ENCODE measurements at regions of chr1 and their contacts with region 1.

Region 1: GRCh38 chr1:150532868-150533302 is 16.3 kb upstream of the ADAMTSL4 start:
- DNase-seq: no peak
- H3K4me3 ChIP-seq: no peak overlapping the region
- H3K4me3 Mint-ChIP-seq: peak overlapping the region; percentile 66
- H3K27ac Mint-ChIP-seq: peak overlapping the region; percentile 91
- H3K4me1 ChIP-seq: peaks cover 55% of the 10 kb centered on the region
- H3K4me1 Mint-ChIP-seq: peaks cover 45% of the 10 kb centered on the region
- H3K27me3 ChIP-seq: no peaks in the 10 kb centered on the region
- H3K27me3 Mint-ChIP-seq: no peaks in the 10 kb centered on the region
- CTCF ChIP-seq: no peak

Region 2: GRCh38 chr1:150309770-150310508 is 222.9 kb before region 1 on chr1:
- CTCF ChIA-PET with region 1: no interaction called
- POLR2A ChIA-PET with region 1: no interaction called
- intact Hi-C with region 1: no loop called
- DNase-seq: no peak
- H3K4me3 ChIP-seq: no peak overlapping the region
- H3K4me3 Mint-ChIP-seq: no peak overlapping the region
- H3K27ac Mint-ChIP-seq: no peak overlapping the region
- H3K4me1 ChIP-seq: no peaks in the 10 kb centered on the region
- H3K4me1 Mint-ChIP-seq: no peaks in the 10 kb centered on the region
- H3K27me3 ChIP-seq: no peaks in the 10 kb centered on the region
- H3K27me3 Mint-ChIP-seq: no peaks in the 10 kb centered on the region
- CTCF ChIP-seq: no peak

Region 3: GRCh38 chr1:150464422-150464826 is 68.5 kb before region 1 on chr1:
- CTCF ChIA-PET with region 1: no interaction called
- POLR2A ChIA-PET with region 1: no interaction called
- intact Hi-C with region 1: loop called (anchors 1 kb)
- DNase-seq: peak; percentile 67 to 78
- H3K4me3 ChIP-seq: no peak overlapping the region
- H3K4me3 Mint-ChIP-seq: no peak overlapping the region
- H3K27ac Mint-ChIP-seq: no peak overlapping the region
- H3K4me1 ChIP-seq: no peaks in the 10 kb centered on the region
- H3K4me1 Mint-ChIP-seq: no peaks in the 10 kb centered on the region
- H3K27me3 ChIP-seq: no peaks in the 10 kb centered on the region
- H3K27me3 Mint-ChIP-seq: no peaks in the 10 kb centered on the region
- CTCF ChIP-seq: peak; percentile 71 to 79

Region 4: GRCh38 chr1:150486964-150487762 is 45.7 kb before region 1 on chr1 and contains the start of gene TARS2:
- CTCF ChIA-PET with region 1: interaction called, 5 read pairs
- POLR2A ChIA-PET with region 1: interaction called, 3 read pairs
- intact Hi-C with region 1: loop called (anchors 1 kb)
- DNase-seq: peak; percentile 97 to 99
- H3K4me3 ChIP-seq: peak within 1 kb of the TSS; percentile 78
- H3K4me3 Mint-ChIP-seq: peak within 1 kb of the TSS; percentile 80
- H3K27ac Mint-ChIP-seq: peak within 1 kb of the TSS; percentile 85
- H3K4me1 ChIP-seq: no peaks in the 10 kb centered on the region
- H3K4me1 Mint-ChIP-seq: peaks cover 8% of the 10 kb centered on the region
- H3K27me3 ChIP-seq: no peaks in the 10 kb centered on the region
- H3K27me3 Mint-ChIP-seq: no peaks in the 10 kb centered on the region
- CTCF ChIP-seq: peak in 1 of 2 experiments; percentile 35
- total RNA-seq, gene TARS2: 26.8 and 30.6 TPM in 2 replicates

Region 5: DNA sequence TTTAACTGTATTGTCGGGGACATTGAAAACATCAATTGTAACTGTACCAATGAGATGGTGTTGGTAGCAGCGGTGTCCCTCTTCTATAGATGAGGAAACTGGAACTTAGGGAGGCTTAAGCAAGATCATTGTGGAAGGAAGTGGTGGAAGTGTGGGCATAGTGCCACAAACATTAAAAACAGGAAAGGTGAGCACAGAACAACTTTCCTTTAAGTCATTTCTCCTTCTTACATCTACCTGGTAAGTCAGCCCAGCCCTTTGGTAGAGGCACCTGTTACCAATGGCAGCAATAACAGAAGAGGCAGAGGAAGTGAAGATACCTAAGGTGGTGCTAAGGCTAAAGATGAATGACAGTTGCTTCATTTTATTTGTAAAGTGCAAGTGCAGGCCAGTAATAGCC is 244.7 kb after region 1 on chr1:
- CTCF ChIA-PET with region 1: no interaction called
- POLR2A ChIA-PET with region 1: no interaction called
- intact Hi-C with region 1: no loop called
- DNase-seq: no peak
- H3K4me3 ChIP-seq: no peak overlapping the region
- H3K4me3 Mint-ChIP-seq: no peak overlapping the region
- H3K27ac Mint-ChIP-seq: no peak overlapping the region
- H3K4me1 ChIP-seq: no peaks in the 10 kb centered on the region
- H3K4me1 Mint-ChIP-seq: no peaks in the 10 kb centered on the region
- H3K27me3 ChIP-seq: no peaks in the 10 kb centered on the region
- H3K27me3 Mint-ChIP-seq: no peaks in the 10 kb centered on the region
- CTCF ChIP-seq: no peak

Measured in Caco-2 (cell line).